PC-9 (cell line): ENCODE measurements at regions of chr11 and their contacts with region 1.

Region 1: DNA sequence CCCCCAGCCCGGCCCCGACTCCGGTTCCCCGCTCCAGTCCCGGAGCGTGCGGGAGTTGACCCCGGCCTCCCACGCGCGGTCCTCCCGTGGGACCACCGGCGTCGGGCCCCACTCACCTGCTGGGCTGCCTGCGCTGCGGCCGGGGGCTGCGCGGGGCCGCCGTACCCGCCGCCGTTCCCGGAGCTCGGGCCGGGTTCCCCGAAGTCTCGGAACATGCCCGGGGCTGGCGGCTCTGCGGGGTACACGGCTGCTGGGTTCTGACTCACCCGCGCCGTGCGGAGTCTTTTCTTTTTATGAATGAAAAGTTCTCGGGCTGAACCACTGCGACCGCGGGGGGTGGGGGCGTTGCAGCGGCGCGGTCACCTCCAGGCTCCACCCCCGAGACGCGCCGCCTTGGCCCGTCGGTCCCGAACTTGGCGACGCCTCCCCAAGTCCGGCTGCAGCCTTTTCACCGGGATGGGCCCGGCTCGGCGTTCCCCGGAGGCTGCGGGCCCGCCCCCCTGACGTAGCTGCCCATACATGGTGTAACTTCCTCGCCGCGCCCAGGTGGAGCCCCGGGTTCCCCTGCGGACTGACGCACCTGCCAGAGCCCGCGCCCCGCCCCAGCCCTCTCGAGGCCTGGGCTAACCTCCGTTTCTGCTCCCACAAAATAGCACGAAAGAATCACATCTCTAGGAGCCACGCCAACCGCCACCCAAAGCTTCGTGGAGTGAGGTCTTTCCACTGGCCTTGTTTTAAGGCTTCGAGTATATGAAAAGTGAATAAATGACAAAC is at the start of gene FOSL1:
- DNase-seq: peak; percentile 97 to 100
- H3K4me3 ChIP-seq: peak within 1 kb of the TSS; percentile 96
- H3K27ac ChIP-seq: peak within 1 kb of the TSS; percentile 95
- H3K4me1 ChIP-seq: peaks cover 71% of the 10 kb centered on the region
- H3K27me3 ChIP-seq: no peaks in the 10 kb centered on the region
- CTCF ChIP-seq: no peak
- total RNA-seq, gene FOSL1: 58.8 and 69.9 TPM in 2 replicates

Region 2: GRCh38 chr11:65911682-65912568 is 11.6 kb after region 1 on chr11:
- CTCF ChIA-PET with region 1: interaction called, 13 read pairs
- POLR2A ChIA-PET with region 1: interaction called, 34 read pairs
- intact Hi-C with region 1: loop called (anchors 1 kb)
- DNase-seq: peak; percentile 63 to 70
- H3K4me3 ChIP-seq: no peak overlapping the region
- H3K27ac ChIP-seq: peak overlapping the region; percentile 67
- H3K4me1 ChIP-seq: peaks cover 77% of the 10 kb centered on the region
- H3K27me3 ChIP-seq: no peaks in the 10 kb centered on the region
- CTCF ChIP-seq: no peak; the same call in 1 of the 2 replicates

Region 3: DNA sequence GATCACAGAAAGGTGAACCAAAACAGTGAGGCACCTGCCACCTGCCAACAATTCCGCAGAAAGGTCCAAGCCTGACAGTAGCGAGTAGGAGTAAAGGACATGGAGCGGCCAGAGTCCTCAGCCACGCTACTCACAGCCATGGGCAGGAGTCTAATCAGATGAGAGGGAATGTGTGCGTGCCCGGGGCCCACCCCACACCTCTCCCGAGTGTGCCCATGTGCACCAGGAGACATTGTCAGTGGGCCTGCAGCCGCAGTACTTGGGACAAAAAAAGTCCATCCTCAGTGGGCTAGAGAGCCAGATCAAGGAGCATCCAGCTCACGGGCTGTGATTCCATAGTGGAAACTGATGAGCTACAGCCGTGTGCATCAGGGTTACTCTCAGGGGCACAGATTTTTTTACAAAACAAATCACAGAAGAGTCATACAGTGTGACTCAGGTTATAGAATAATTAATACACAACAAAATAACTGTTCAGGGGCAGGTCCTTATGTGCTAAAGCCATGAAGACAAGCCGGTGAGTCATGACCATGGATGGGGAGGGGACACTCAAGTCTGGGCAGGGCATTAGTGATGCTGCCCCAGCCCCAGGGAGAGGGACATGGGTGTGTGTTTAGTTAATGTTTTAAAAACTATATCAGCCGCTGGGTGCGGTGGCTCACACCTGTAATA is 73.3 kb after region 1 on chr11:
- CTCF ChIA-PET with region 1: interaction called, 11 read pairs
- POLR2A ChIA-PET with region 1: no interaction called
- intact Hi-C with region 1: no loop called
- DNase-seq: no peak
- H3K4me3 ChIP-seq: no peak overlapping the region
- H3K27ac ChIP-seq: no peak overlapping the region
- H3K4me1 ChIP-seq: no peaks in the 10 kb centered on the region
- H3K27me3 ChIP-seq: no peaks in the 10 kb centered on the region
- CTCF ChIP-seq: no peak

Region 4: DNA sequence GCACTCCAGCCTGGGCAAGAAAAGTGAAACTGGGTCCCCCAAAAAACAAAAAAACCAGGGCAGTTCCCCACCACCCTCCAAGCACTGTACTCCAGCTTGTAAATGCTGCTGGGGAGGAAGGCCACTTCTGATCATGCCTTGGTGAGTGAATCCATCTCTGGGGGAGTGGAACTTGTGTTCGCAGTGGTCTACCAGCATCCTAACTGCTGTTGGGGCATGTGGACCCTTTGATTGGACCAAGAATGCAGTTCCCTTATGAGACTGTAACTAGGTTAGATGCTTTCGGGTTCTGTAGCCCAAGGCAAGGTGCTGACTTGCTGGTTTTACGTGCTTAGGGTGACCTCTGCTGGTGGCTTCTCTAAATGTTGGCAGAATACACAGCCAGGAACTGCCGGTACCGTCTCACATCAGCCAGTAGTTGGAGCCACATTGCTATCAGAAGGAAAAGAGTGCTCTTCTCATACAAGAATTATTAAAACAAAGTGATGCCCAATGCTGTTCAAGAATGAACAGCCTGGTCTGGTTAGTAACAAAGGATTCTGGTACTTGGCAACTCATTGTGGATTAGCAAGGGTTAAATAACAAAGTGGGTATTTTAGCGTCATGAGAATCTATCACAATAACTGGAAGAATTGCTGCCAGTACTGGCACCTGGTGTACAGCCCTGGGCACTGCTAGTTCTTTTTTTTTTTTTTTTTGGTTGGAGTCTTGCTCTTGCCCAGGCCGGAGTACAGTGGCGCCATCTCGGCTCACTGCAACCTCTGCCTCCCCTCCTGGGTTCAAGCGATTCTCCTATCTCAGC is 88.7 kb after region 1 on chr11:
- CTCF ChIA-PET with region 1: interaction called, 14 read pairs
- POLR2A ChIA-PET with region 1: no interaction called
- intact Hi-C with region 1: no loop called
- DNase-seq: peak; percentile 87 to 92
- H3K4me3 ChIP-seq: no peak overlapping the region
- H3K27ac ChIP-seq: no peak overlapping the region
- H3K4me1 ChIP-seq: peaks cover 4% of the 10 kb centered on the region; the same call in 1 of the 2 replicates
- H3K27me3 ChIP-seq: no peaks in the 10 kb centered on the region
- CTCF ChIP-seq: peak; percentile 99